Right ventricle myocardium inferior (tissue), 1 donor: ENCODE measurements at regions of chr15 and their contacts with region 1.

Region 1: DNA sequence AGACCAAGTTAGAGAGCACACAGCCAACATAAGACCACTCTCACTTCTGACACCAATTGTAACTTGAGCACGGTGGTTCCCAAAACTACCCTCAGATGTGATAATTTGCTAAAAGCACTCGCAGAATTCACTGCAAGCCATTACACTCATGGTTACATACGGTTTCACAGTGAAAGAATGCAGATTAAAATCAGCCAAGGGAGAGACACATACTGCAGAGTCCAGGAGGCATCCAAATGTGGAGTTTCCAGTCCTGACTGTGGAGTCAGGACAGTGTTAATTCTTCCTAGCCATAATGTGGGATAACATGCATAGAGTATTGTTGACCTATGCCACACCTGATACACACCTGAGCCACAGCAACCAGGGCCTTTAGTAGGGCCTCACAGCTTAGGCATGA is 956.4 kb downstream of the NTRK3 start:
- DNase-seq: no peak
- ATAC-seq: no peak

Region 2: DNA sequence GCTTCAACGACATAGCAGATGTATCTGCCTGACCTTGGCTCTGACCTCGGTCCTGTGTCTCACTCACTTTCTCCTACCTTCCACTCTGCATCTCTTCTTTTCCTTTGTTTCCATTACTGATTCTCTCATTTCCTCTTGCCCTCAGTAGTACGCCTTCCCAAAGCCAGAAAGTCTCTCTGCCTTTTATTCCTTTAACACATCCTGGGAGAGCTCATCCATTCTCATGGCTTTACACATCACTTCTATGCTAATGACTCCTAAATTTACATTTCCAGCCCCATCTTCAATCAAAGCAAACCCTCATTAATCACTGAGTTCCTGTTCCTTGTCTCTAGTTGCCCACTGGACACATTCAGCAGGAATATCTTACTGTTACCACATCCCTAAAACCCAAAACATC is 17.8 kb after region 1 on chr15:
- intact Hi-C with region 1: loop called (anchors 2 kb)
- DNase-seq: no peak
- ATAC-seq: no peak

Region 3: GRCh38 chr15:87547470-87548181 is 247.5 kb after region 1 on chr15:
- intact Hi-C with region 1: no loop called
- DNase-seq: no peak
- ATAC-seq: peak; percentile 72